ENCODE measurements at regions of chr15 and their contacts with region 1.

Region 1: DNA sequence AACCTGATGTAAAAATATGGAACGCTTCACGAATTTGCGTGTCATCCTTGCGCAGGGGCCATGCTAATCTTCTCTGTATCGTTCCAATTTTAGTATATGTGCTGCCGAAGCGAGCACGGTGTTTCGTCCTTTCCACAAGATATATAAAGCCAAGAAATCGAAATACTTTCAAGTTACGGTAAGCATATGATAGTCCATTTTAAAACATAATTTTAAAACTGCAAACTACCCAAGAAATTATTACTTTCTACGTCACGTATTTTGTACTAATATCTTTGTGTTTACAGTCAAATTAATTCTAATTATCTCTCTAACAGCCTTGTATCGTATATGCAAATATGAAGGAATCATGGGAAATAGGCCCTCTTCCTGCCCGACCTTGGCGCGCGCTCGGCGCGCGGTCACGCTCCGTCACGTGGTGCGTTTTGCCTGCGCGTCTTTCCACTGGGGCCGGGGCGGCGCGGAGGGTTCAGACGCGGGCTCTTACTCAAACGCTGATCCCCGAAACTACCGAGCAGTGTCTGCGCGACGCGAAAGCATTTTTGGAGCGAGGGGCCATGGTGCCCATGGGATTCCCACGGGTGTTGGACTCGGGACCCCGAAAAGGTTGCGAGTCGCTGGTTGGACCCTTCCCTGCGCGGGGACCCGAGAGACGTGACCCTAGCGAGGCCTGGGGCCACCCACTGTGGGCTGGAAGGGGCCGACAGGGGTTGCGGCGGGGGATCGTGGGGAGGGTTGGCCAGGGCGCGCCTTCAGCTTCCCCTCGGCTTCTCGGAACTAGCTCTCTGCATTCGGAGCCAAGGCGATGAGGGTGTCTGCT is at the start of gene RNU6-1:
- DNase-seq: peak; percentile 86 to 98
- H3K4me3 ChIP-seq: peak within 1 kb of the TSS; percentile 65 to 96
- H3K27ac ChIP-seq: peak within 1 kb of the TSS; percentile 94 to 98
- H3K4me1 ChIP-seq: peaks cover 5 to 17% of the 10 kb centered on the region in 2 donors
- H3K27me3 ChIP-seq: peaks cover 2% of the 10 kb centered on the region
- CTCF ChIP-seq: peak in 1 of 3 experiments; percentile 30
- total RNA-seq, gene RNU6-1: not detected

Region 2: DNA sequence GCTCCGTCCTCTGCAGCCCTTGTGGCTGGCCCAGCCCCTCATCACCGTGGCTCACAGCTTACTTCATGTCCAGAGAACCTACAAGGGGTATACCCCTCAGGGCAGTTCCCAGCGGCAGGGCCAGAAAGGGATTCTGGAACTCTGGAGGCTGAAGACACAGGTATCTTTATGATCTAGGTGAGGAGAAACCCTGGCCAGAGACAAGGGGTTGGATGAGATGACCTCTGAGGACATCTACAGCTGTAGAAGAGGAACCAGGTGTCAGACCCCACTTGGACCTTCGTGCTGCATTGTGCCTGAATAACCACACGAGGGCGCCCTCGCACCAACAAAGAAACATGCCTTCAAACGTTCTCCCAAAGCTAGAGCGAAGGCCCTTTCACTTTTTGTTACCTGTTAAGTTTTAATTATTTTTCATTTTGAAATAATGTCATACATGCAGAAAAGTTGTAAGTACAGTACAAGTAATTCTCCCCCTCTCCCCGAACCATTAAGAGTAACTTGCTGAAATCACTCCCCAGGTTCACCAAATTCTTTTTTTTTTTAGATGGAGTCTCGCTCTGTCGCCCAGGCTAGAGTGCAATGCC is 893.5 kb before region 1 on chr15:
- intact Hi-C with region 1: loop called (anchors 10 kb)
- DNase-seq: peak in 1 of 2 donors; percentile 88
- H3K4me3 ChIP-seq: no peak overlapping the region
- H3K27ac ChIP-seq: no peak overlapping the region
- H3K4me1 ChIP-seq: peaks cover 0 to 3% of the 10 kb centered on the region in 2 donors
- H3K27me3 ChIP-seq: no peaks in the 10 kb centered on the region
- CTCF ChIP-seq: peak; percentile 88 to 93 (median 90)

Region 3: GRCh38 chr15:67521029-67521811 is 318.9 kb before region 1 on chr15 and contains the start of gene C15orf61:
- intact Hi-C with region 1: loop called (anchors 2 kb)
- DNase-seq: peak; percentile 40 to 90
- H3K4me3 ChIP-seq: peak within 1 kb of the TSS; percentile 76 to 78
- H3K27ac ChIP-seq: peak within 1 kb of the TSS; percentile 91 to 93
- H3K4me1 ChIP-seq: peaks cover 0 to 11% of the 10 kb centered on the region in 2 donors
- H3K27me3 ChIP-seq: no peaks in the 10 kb centered on the region
- CTCF ChIP-seq: no peak
- total RNA-seq, gene C15orf61: 2.3 TPM

Region 4: GRCh38 chr15:67945951-67946700 is 106.0 kb after region 1 on chr15:
- intact Hi-C with region 1: loop called (anchors 5 kb)
- DNase-seq: no peak
- H3K4me3 ChIP-seq: no peak overlapping the region
- H3K27ac ChIP-seq: peak overlapping the region; percentile 11 to 83
- H3K4me1 ChIP-seq: peaks cover 3 to 34% of the 10 kb centered on the region in 2 donors
- H3K27me3 ChIP-seq: no peaks in the 10 kb centered on the region
- CTCF ChIP-seq: no peak

Region 5: DNA sequence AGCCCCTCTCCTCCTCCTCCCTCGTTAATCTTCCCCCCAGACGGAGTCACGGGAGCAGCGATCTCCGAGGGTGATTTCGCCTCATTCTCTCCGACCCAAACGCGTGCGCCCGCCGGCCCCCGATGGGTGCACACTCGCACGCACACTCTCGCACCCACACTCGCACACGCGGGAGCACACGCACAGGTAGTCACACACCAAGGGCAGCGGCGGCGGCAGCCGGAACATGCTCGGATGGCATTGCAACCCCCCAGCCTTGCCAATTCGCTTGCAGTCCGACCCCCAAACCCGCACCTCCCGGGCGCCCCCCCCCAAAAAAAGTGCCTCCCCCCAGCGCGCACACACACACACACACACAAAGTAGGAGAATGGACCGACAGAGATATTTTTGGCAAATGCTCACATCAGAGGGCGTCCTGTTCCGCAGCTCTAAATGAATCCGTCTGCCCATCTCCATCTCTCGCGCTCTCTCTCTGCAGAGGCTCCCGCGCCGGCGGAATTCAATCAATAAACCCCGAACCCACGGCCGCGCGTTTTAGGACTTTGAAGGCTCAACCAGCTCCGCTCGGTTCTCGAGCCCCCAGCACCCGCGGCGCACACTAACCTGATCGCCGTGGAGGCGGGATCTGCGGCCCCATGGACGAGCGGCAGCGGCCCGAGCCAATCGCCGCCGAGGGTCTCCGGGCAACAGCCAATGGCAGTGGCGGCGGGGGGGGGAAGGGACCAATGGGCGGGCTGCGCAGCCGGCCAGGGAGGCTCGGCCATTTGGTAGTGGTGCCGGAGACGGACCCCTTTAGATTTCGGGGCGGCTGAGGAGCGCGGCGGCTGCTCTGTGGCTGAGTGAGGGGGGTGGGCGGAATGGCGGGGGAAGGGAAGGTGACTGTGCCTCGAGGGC is 980.4 kb after region 1 on chr15 and contains the start of gene ANP32A:
- intact Hi-C with region 1: loop called (anchors 5 kb)
- DNase-seq: peak; percentile 81 to 98
- H3K4me3 ChIP-seq: peak within 1 kb of the TSS; percentile 90 to 96
- H3K27ac ChIP-seq: peak within 1 kb of the TSS; percentile 98
- H3K4me1 ChIP-seq: peaks cover 0 to 10% of the 10 kb centered on the region in 2 donors
- H3K27me3 ChIP-seq: no peaks in the 10 kb centered on the region
- CTCF ChIP-seq: no peak
- total RNA-seq, gene ANP32A: 19.2 TPM